Esophagus muscularis mucosa (tissue), 4 donors: ENCODE measurements at regions of chr11 and their contacts with region 1.

Region 1: GRCh38 chr11:44095506-44096394 is at the start of gene EXT2:
- DNase-seq: peak; percentile 96
- H3K4me3 ChIP-seq: peak within 1 kb of the TSS; percentile 77 to 96 (median 90)
- H3K27ac ChIP-seq: peak within 1 kb of the TSS; percentile 83 to 89 (median 87)
- H3K4me1 ChIP-seq: peaks cover 8 to 31% (median 29%) of the 10 kb centered on the region in 4 donors
- H3K27me3 ChIP-seq: no peaks in the 10 kb centered on the region
- CTCF ChIP-seq: peak; percentile 93 to 95 (median 95)
- EP300 ChIP-seq: no peak
- POLR2A ChIP-seq: no peak
- total RNA-seq, gene EXT2: 47.8 to 80.4 (median 68.0) TPM

Region 2: DNA sequence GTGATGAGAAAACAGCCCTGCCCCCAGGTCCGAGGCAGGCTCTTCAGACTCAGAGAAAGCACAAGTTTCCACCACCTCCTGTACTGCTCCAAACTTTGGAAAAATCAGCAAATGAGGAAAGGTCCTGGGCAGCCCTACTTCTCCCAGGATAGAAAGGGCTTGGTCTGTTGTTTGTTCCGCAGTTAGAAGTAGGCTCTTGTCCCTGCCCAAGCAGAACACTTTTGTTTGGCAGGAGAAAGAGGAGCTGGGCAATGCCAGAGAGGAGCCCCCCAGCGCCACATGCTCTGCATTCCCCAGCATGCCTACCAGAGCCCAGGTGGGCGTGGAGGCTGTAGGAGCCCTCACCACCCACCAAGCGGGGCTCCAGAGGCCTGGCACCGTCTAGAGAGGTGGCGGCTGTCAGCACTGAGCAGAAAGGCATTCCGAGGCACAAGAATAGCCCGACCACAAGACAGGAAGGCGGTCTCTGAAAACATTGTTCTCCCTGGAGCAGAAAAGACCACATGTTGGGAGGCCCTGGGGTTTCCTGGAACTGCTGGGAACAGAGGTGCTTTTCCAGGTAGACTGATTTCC is 379.4 kb after region 1 on chr11:
- intact Hi-C with region 1: no loop called
- DNase-seq: no peak
- H3K4me3 ChIP-seq: no peak overlapping the region
- H3K27ac ChIP-seq: no peak overlapping the region
- H3K4me1 ChIP-seq: no peaks in the 10 kb centered on the region
- H3K27me3 ChIP-seq: peaks cover 0 to 7% (median 0%) of the 10 kb centered on the region in 4 donors
- CTCF ChIP-seq: no peak
- EP300 ChIP-seq: no peak
- POLR2A ChIP-seq: no peak

Region 3: DNA sequence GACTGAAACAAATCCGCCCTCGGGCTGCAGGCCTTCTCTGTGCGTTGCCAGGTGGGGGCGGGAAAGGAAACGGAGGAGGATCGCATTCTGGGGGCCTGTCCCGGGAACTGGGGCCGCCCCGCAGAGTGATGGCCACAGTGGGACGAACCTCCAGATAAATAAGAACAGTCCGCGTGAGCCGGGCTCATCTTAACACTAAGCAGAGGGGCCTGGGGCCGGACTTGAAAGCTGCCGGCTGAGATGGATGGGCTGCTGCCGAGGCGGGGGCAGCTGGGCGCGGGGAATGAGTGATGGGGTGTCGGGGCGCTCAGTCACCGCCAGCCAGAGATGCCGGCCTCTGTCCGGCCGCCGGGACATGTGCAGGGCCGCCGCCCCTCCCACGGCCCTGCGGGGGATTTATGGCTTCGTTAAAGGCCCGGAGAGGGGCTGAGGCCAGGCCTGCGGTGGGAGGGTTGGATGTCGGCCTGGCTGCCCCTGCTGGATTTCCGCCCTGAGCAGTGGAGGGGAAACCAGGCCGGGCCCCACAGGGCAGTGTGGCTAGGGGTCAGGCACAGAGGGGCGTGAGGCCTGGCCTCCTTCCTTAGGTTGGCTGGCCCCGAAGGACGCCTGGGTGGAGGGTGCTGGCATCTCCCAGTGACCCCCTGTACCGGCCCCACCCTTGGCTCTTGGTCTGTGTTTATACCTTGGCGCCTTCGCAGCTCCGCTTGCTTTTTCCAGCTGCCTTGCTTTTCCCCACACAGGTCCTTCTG is 424.4 kb after region 1 on chr11:
- intact Hi-C with region 1: loop called (anchors 5 kb)
- DNase-seq: no peak
- H3K4me3 ChIP-seq: peak overlapping the region; percentile 18 to 33 (median 30)
- H3K27ac ChIP-seq: peak overlapping the region; percentile 52 to 75 (median 67)
- H3K4me1 ChIP-seq: peaks cover 3 to 19% (median 16%) of the 10 kb centered on the region in 4 donors
- H3K27me3 ChIP-seq: peaks cover 0 to 4% (median 0%) of the 10 kb centered on the region in 4 donors
- CTCF ChIP-seq: no peak
- EP300 ChIP-seq: no peak
- POLR2A ChIP-seq: no peak

Region 4: GRCh38 chr11:44538375-44539054 is 442.8 kb after region 1 on chr11:
- intact Hi-C with region 1: loop called (anchors 5 kb)
- DNase-seq: no peak
- H3K4me3 ChIP-seq: no peak overlapping the region
- H3K27ac ChIP-seq: no peak overlapping the region
- H3K4me1 ChIP-seq: peaks cover 0 to 6% (median 5%) of the 10 kb centered on the region in 4 donors
- H3K27me3 ChIP-seq: peaks cover 0 to 14% (median 0%) of the 10 kb centered on the region in 4 donors
- CTCF ChIP-seq: peak; percentile 93 to 96 (median 95)
- EP300 ChIP-seq: no peak
- POLR2A ChIP-seq: no peak